PC-9 (cell line): ENCODE measurements at regions of chr14 and their contacts with region 1.

Region 1: GRCh38 chr14:30270200-30271161 is 288.5 kb upstream of the G2E3 start:
- DNase-seq: peak; percentile 33 to 65
- H3K4me3 ChIP-seq: no peak overlapping the region
- H3K27ac ChIP-seq: no peak overlapping the region
- H3K4me1 ChIP-seq: no peaks in the 10 kb centered on the region
- H3K27me3 ChIP-seq: no peaks in the 10 kb centered on the region
- CTCF ChIP-seq: peak; percentile 72

Region 2: GRCh38 chr14:30214461-30215090 is 55.9 kb before region 1 on chr14:
- CTCF ChIA-PET with region 1: interaction called, 10 read pairs
- POLR2A ChIA-PET with region 1: no interaction called
- intact Hi-C with region 1: loop called (anchors 2 kb)
- DNase-seq: no peak
- H3K4me3 ChIP-seq: no peak overlapping the region
- H3K27ac ChIP-seq: no peak overlapping the region
- H3K4me1 ChIP-seq: no peaks in the 10 kb centered on the region
- H3K27me3 ChIP-seq: no peaks in the 10 kb centered on the region
- CTCF ChIP-seq: peak; percentile 73

Region 3: GRCh38 chr14:30443368-30444007 is 173.0 kb after region 1 on chr14:
- CTCF ChIA-PET with region 1: interaction called, 3 read pairs
- POLR2A ChIA-PET with region 1: no interaction called
- intact Hi-C with region 1: loop called (anchors 5 kb)
- DNase-seq: no peak
- H3K4me3 ChIP-seq: no peak overlapping the region
- H3K27ac ChIP-seq: no peak overlapping the region
- H3K4me1 ChIP-seq: no peaks in the 10 kb centered on the region
- H3K27me3 ChIP-seq: no peaks in the 10 kb centered on the region
- CTCF ChIP-seq: peak; percentile 65